MCF 10A (cell line): ENCODE measurements at regions of chr13 and their contacts with region 1.

Region 1: DNA sequence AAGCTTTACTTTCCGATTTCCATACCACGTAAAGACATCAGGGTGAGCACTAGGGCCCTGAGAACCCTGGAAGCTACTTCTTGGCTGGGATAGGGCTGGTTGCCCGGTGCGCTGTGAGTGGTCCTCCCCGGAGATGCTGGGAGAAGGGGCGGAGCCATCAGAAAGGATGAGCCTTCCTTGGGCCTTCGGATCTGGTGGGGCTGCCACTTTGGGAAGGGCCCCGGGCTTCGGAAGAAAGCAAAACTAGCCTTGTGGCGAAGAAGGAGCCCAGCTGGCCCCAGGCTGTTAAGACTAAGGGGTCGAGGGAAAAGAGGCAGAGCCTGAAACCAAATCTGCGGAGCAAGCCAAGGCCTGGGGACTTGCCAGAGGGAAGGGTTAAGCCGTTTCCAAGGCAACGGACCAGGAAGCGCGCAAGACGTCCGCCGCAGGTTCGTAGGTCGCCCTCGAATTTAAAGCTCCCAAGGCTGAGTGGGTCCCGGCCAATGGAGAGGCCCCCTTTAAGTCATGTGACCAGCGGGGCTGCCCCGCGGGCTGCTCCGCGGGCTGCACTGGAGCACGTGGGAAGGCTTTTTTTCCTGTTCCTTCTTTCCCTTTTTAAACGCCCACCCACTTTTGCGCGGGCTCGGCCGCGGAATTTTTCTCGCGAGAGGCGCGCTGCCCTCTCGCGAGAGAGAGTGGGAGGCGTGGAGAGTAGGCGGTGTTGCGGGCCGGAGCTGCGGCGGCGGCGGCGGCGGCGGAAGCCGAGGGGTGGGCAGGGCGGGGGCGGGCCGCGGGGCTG is 426 bp upstream of the AKAP11 start:
- DNase-seq: peak; percentile 97
- H3K4me3 Mint-ChIP-seq: peak overlapping the region; percentile 98
- H3K27ac Mint-ChIP-seq: peak overlapping the region; percentile 95
- H3K4me1 Mint-ChIP-seq: peaks cover 29% of the 10 kb centered on the region
- H3K27me3 Mint-ChIP-seq: no peaks in the 10 kb centered on the region
- CTCF ChIP-seq: no peak

Region 2: GRCh38 chr13:42247883-42248282 is 23.6 kb before region 1 on chr13:
- CTCF ChIA-PET with region 1: no interaction called
- POLR2A ChIA-PET with region 1: interaction called, 11 read pairs
- intact Hi-C with region 1: no loop called
- DNase-seq: peak; percentile 9
- H3K4me3 Mint-ChIP-seq: no peak overlapping the region
- H3K27ac Mint-ChIP-seq: no peak overlapping the region
- H3K4me1 Mint-ChIP-seq: no peaks in the 10 kb centered on the region
- H3K27me3 Mint-ChIP-seq: no peaks in the 10 kb centered on the region
- CTCF ChIP-seq: no peak

Region 3: GRCh38 chr13:42283574-42283973 is 12.0 kb after region 1 on chr13:
- CTCF ChIA-PET with region 1: no interaction called
- POLR2A ChIA-PET with region 1: interaction called, 15 read pairs
- intact Hi-C with region 1: no loop called
- DNase-seq: no peak
- H3K4me3 Mint-ChIP-seq: no peak overlapping the region
- H3K27ac Mint-ChIP-seq: no peak overlapping the region
- H3K4me1 Mint-ChIP-seq: peaks cover 12% of the 10 kb centered on the region
- H3K27me3 Mint-ChIP-seq: no peaks in the 10 kb centered on the region
- CTCF ChIP-seq: no peak